ENCODE measurements at regions of chr9 and their contacts with region 1.

Region 1: GRCh38 chr9:113807173-113808061 is 68.7 kb upstream of the ZNF618 start:
- DNase-seq: peak; percentile 49
- H3K4me3 Mint-ChIP-seq: no peak overlapping the region
- H3K27ac Mint-ChIP-seq: no peak overlapping the region
- H3K4me1 Mint-ChIP-seq: no peaks in the 10 kb centered on the region
- H3K27me3 Mint-ChIP-seq: peaks cover 14% of the 10 kb centered on the region

Region 2: GRCh38 chr9:113876151-113876992 is 69.0 kb after region 1 on chr9 and contains the start of gene ZNF618:
- CTCF ChIA-PET with region 1: interaction called, 20 read pairs
- POLR2A ChIA-PET with region 1: no interaction called
- intact Hi-C with region 1: loop called (anchors 1 kb)
- DNase-seq: peak; percentile 19
- H3K4me3 Mint-ChIP-seq: peak within 1 kb of the TSS; percentile 87
- H3K27ac Mint-ChIP-seq: no peak within 1 kb of the TSS
- H3K4me1 Mint-ChIP-seq: peaks cover 2% of the 10 kb centered on the region
- H3K27me3 Mint-ChIP-seq: peaks cover 5% of the 10 kb centered on the region
- total RNA-seq, gene ZNF618: 0.12 to 0.33 TPM

Region 3: GRCh38 chr9:113963017-113963620 is 155.7 kb after region 1 on chr9:
- CTCF ChIA-PET with region 1: interaction called, 15 read pairs
- POLR2A ChIA-PET with region 1: no interaction called
- intact Hi-C with region 1: loop called (anchors 1 kb)
- DNase-seq: peak; percentile 60
- H3K4me3 Mint-ChIP-seq: no peak overlapping the region
- H3K27ac Mint-ChIP-seq: no peak overlapping the region
- H3K4me1 Mint-ChIP-seq: no peaks in the 10 kb centered on the region
- H3K27me3 Mint-ChIP-seq: no peaks in the 10 kb centered on the region